PC-9 (cell line): ENCODE measurements at regions of chr2 and their contacts with region 1.

Region 1: GRCh38 chr2:224832207-224832606 is 116.0 kb upstream of the CCDC195 start:
- DNase-seq: no peak
- H3K4me3 ChIP-seq: no peak overlapping the region
- H3K27ac ChIP-seq: no peak overlapping the region
- H3K4me1 ChIP-seq: no peaks in the 10 kb centered on the region
- H3K27me3 ChIP-seq: no peaks in the 10 kb centered on the region
- CTCF ChIP-seq: no peak

Region 2: GRCh38 chr2:224816816-224817215 is 15.4 kb before region 1 on chr2:
- CTCF ChIA-PET with region 1: interaction called, 10 read pairs
- POLR2A ChIA-PET with region 1: no interaction called
- intact Hi-C with region 1: no loop called
- DNase-seq: peak in 1 of 2 experiments; percentile 79
- H3K4me3 ChIP-seq: no peak overlapping the region
- H3K27ac ChIP-seq: no peak overlapping the region
- H3K4me1 ChIP-seq: peaks cover 13% of the 10 kb centered on the region
- H3K27me3 ChIP-seq: no peaks in the 10 kb centered on the region
- CTCF ChIP-seq: no peak

Region 3: DNA sequence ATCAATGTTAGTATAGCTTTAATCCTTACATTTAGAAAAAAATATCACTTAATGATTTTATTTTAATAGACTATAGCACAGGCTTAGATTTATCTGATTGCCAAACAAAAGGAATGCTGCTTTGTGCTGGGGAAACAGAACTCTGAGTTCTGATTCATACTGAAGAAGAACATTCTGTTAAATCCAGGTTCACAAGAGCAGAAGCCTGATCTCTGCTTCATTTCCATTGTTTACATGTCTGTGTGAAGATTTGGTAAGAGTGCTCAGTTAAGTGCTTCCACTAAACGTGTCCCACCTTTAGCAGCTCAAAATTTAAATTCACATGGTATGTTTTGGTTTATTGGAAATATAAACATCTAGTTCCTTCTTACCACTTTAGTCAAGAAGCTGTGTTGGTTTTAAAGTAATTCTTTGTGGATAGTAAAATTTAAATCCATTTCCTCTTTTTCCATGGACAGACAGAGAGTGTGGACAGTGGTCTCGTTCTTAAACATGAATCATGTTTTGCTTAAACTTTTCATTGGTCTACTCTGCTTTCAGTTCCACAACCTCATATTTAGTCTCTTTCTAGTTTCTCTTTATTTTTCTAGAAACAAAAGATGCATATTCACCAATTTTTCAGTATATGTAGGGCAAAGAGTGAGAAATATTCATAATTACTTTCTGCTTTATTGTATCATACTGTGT is 626.4 kb after region 1 on chr2:
- CTCF ChIA-PET with region 1: no interaction called
- POLR2A ChIA-PET with region 1: no interaction called
- intact Hi-C with region 1: no loop called
- DNase-seq: no peak
- H3K4me3 ChIP-seq: no peak overlapping the region
- H3K27ac ChIP-seq: no peak overlapping the region
- H3K4me1 ChIP-seq: no peaks in the 10 kb centered on the region
- H3K27me3 ChIP-seq: no peaks in the 10 kb centered on the region
- CTCF ChIP-seq: no peak